Activated CD4-positive, alpha-beta memory T cell treated with anti-CD3 and anti-CD28 coated beads, Interleukin-2, amount 10 ng/mL, durations not matched to agents 7 days and 5 days (primary cell): ENCODE measurements at regions of chr3 and their contacts with region 1.

Region 1: DNA sequence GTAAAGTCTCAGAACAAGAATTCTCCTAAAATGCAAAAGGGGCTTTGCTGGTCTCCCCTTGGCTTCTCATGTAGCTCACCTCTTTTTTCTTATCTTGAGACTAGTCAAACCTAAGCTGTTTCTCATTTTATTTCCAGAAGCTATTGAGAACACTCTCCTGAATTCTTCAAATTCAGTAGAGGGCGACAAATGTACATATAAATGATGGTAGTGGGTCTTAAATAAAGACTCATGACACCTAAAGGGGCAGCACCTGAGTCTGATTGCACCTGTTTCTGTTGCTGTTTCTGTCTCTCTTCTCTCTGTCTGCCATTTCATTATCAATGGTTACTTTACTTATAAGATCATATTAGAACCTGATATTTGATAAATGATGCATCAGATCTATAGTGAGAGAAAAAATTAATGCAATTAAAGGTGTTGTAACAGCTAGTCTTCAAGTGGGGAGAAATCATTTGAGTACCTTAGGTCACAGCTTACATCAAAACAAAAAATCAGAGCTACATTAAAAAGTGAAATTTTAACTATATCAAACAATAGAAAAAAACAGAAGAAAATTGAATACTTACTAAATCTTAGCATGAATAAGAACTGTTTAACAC is 7.0 kb downstream of the ADIPOQ start:
- DNase-seq: no peak
- H3K4me3 Mint-ChIP-seq: no peak overlapping the region
- H3K27ac Mint-ChIP-seq: no peak overlapping the region
- H3K4me1 Mint-ChIP-seq: peaks cover 16% of the 10 kb centered on the region
- H3K27me3 Mint-ChIP-seq: peaks cover 6% of the 10 kb centered on the region

Region 2: GRCh38 chr3:186915806-186916796 is 66.6 kb after region 1 on chr3:
- CTCF ChIA-PET with region 1: interaction called, 11 read pairs
- POLR2A ChIA-PET with region 1: no interaction called
- DNase-seq: peak; percentile 25
- H3K4me3 Mint-ChIP-seq: no peak overlapping the region
- H3K27ac Mint-ChIP-seq: no peak overlapping the region
- H3K4me1 Mint-ChIP-seq: peaks cover 36% of the 10 kb centered on the region
- H3K27me3 Mint-ChIP-seq: no peaks in the 10 kb centered on the region

Region 3: DNA sequence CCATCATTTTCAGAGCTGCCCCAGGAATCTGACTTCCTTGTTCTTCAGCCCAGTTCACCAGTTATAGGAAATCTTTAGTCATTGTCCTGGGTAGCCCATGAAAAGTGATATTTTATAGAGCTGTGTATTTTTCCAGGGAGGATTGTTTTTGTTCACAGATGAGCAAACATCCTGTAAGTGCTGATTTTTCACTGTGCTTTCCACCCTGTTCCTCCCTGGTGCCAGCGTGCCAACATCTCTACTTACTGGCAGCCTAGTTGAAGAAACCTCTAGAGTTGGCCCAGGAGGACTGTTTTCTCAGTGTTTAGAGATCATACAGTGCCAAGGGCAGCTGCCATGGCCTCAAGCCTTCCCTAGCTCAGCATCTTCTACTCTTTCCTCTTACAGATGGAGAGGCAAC is 122.1 kb after region 1 on chr3:
- CTCF ChIA-PET with region 1: interaction called, 10 read pairs
- POLR2A ChIA-PET with region 1: no interaction called
- DNase-seq: no peak
- H3K4me3 Mint-ChIP-seq: no peak overlapping the region
- H3K27ac Mint-ChIP-seq: peak overlapping the region; percentile 35
- H3K4me1 Mint-ChIP-seq: peaks cover 32% of the 10 kb centered on the region
- H3K27me3 Mint-ChIP-seq: no peaks in the 10 kb centered on the region

Region 4: GRCh38 chr3:187066228-187066995 is 216.9 kb after region 1 on chr3:
- CTCF ChIA-PET with region 1: interaction called, 10 read pairs
- POLR2A ChIA-PET with region 1: interaction called, 3 read pairs
- DNase-seq: peak; percentile 45
- H3K4me3 Mint-ChIP-seq: no peak overlapping the region
- H3K27ac Mint-ChIP-seq: peak overlapping the region; percentile 22
- H3K4me1 Mint-ChIP-seq: peaks cover 43% of the 10 kb centered on the region
- H3K27me3 Mint-ChIP-seq: no peaks in the 10 kb centered on the region

Region 5: DNA sequence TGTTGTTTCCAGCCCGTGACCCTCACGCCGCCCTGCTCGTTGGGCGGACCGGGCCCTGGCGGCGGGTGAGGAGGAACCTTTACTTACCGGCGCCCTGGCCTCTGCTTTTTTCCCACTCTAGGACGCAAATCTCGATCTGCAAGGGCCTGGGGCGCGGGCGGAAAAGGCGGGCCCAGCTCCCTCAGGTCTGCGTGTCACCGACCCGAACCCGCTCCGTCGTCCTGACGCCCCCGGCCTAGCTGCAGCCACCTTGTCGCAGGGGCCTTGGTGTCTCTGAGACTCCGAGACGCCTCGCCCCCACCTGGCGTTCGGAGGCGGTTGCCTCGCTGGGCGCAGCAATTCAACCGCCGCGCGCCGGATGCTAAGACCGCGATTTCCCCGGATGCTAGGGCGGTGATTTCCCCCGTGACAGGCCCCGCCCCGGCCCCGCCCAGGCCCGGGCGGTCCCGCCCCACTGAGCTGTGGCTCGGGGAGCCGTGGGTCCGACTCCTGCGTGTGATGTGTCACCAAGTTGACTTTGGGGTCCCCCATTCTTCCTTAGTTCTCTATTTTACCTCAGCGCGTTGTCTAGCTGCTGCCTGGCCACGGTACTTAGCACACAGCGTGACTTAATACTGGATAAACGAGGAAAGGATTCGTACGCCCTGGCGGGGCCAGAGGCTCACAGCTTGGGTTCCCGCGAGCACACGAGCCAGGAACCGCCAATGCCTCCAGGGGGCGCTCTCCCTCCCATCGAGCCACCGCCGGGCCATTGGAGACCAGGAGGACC is 289.8 kb after region 1 on chr3 and contains the start of gene RPL39L:
- CTCF ChIA-PET with region 1: interaction called, 36 read pairs
- POLR2A ChIA-PET with region 1: no interaction called
- DNase-seq: peak; percentile 95
- H3K4me3 Mint-ChIP-seq: peak within 1 kb of the TSS; percentile 86
- H3K27ac Mint-ChIP-seq: peak within 1 kb of the TSS; percentile 90
- H3K4me1 Mint-ChIP-seq: peaks cover 35% of the 10 kb centered on the region
- H3K27me3 Mint-ChIP-seq: peaks cover 4% of the 10 kb centered on the region
- total RNA-seq, gene RPL39L: 23.0 to 23.1 TPM